ENCODE measurements at regions of chr2 and their contacts with region 1.

Region 1: GRCh38 chr2:41716497-41716896 is 331.3 kb upstream of the PKDCC start:
- DNase-seq: no peak
- ATAC-seq: no peak
- H3K4me3 ChIP-seq: no peak overlapping the region
- H3K27ac ChIP-seq: no peak overlapping the region
- H3K4me1 ChIP-seq: no peaks in the 10 kb centered on the region
- H3K27me3 ChIP-seq: no peaks in the 10 kb centered on the region
- CTCF ChIP-seq: no peak

Region 2: GRCh38 chr2:41686156-41686555 is 30.3 kb before region 1 on chr2:
- CTCF ChIA-PET with region 1: no interaction called
- POLR2A ChIA-PET with region 1: no interaction called
- in situ Hi-C with region 1: no loop called
- intact Hi-C with region 1: no loop called
- DNase-seq: no peak
- ATAC-seq: no peak
- H3K4me3 ChIP-seq: no peak overlapping the region
- H3K27ac ChIP-seq: no peak overlapping the region
- H3K4me1 ChIP-seq: no peaks in the 10 kb centered on the region
- H3K27me3 ChIP-seq: no peaks in the 10 kb centered on the region
- CTCF ChIP-seq: no peak

Region 3: DNA sequence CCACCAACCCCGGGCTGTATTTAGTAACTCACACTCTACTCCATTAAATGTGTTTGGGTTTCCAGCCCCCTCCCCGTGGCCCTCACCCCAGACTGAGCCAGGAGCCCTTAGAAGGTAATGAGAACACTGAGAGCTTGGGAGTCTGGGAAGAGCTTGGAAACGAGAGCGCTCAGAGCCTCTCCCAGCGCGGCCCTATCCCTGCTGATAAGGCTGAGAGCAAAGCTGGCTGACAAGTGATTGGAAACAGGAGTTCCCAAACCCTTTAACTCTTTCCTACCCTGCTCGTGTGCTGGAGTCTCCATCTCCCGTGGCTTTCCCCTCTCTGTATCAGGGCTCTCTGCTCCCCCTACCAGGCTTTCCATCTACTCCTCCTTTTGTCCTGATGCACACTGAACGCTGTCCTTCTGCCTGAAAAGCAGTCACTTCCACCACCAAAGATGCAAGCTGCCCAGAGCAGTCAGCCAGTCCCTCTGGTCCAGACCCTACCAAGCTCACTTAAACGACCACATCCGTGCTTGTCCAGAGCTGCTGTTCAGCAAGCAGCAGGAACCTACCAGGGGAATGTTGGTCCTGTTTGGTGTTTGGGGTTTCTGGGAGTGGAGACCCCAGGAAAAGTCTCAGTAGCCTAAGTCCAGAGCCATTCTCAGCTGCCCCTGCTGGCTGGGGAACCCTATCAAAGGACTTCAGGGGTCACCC is 231.4 kb after region 1 on chr2:
- CTCF ChIA-PET with region 1: no interaction called
- POLR2A ChIA-PET with region 1: no interaction called
- in situ Hi-C with region 1: no loop called
- intact Hi-C with region 1: no loop called
- DNase-seq: no peak
- ATAC-seq: no peak
- H3K4me3 ChIP-seq: no peak overlapping the region
- H3K27ac ChIP-seq: no peak overlapping the region
- H3K4me1 ChIP-seq: no peaks in the 10 kb centered on the region
- H3K27me3 ChIP-seq: no peaks in the 10 kb centered on the region; the same call in 1 of the 2 replicates
- CTCF ChIP-seq: no peak

Region 4: DNA sequence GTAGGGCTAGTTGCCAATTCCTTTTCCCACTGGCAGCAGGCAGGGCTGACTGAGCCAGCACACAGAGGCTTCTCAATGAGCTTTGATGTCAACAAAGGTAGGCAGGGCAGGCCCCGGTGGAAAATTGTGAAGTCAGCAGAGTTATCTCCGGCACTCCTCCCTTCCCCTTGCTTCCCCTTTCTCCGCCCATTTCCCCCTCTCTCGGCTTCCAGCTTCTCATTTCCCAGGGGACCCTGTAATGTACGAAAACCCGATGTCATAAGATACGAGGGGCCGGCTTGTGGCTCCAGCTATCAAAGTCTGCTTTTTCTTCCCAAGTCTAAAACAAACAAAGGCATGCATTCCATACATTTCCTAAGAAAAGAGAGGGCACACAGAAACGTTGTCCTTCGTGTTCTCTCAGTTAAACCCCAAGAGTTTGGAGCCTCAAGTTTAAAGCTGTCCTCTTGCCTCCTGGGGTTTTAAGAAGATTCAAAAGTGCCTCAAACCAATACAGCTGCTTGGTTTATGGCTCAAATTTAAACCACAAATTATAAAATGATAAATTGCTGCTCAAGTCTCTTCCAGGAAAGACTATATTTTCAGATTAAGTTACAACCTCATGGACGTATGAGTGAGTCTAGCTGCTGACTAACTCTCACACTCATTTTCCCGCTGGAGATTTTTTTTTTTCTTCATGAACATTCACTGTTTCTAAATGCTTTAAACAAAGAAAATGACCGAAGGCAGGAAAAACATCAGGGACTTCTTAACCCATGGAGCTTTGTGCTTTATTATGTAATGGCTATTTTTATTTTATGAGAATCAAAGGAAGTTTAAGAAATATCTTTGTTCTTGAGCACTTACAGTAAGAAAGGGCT is 425.4 kb after region 1 on chr2:
- CTCF ChIA-PET with region 1: no interaction called
- POLR2A ChIA-PET with region 1: no interaction called
- in situ Hi-C with region 1: no loop called
- intact Hi-C with region 1: no loop called
- DNase-seq: no peak
- ATAC-seq: peak; percentile 69
- H3K4me3 ChIP-seq: peak overlapping the region; percentile 26 to 50
- H3K27ac ChIP-seq: peak overlapping the region; percentile 99
- H3K4me1 ChIP-seq: peaks cover 67% of the 10 kb centered on the region
- H3K27me3 ChIP-seq: no peaks in the 10 kb centered on the region
- CTCF ChIP-seq: no peak

Region 5: GRCh38 chr2:43444989-43445645 is 1728.6 kb after region 1 on chr2:
- CTCF ChIA-PET with region 1: interaction called, 13 read pairs
- POLR2A ChIA-PET with region 1: no interaction called
- in situ Hi-C with region 1: no loop called
- intact Hi-C with region 1: no loop called
- DNase-seq: no peak
- ATAC-seq: no peak
- H3K4me3 ChIP-seq: no peak overlapping the region
- H3K27ac ChIP-seq: no peak overlapping the region
- H3K4me1 ChIP-seq: peaks cover 2% of the 10 kb centered on the region; the same call in 1 of the 2 replicates
- H3K27me3 ChIP-seq: no peaks in the 10 kb centered on the region
- CTCF ChIP-seq: no peak